A549 (cell line): ENCODE measurements at regions of chr3 and their contacts with region 1.

Region 1: GRCh38 chr3:132399054-132399929 is 18.0 kb upstream of the DNAJC13 start:
- DNase-seq: peak; percentile 34 to 37
- ATAC-seq: peak; percentile 50 to 69; a peak in 4 of 6 replicates
- H3K4me3 ChIP-seq: no peak overlapping the region
- H3K27ac ChIP-seq: no peak overlapping the region
- H3K4me1 ChIP-seq: no peaks in the 10 kb centered on the region
- CTCF ChIP-seq: peak; percentile 73
- EP300 ChIP-seq: no peak
- POLR2A ChIP-seq: no peak
- RAD21 ChIP-seq: peak; percentile 77 to 82

Region 2: DNA sequence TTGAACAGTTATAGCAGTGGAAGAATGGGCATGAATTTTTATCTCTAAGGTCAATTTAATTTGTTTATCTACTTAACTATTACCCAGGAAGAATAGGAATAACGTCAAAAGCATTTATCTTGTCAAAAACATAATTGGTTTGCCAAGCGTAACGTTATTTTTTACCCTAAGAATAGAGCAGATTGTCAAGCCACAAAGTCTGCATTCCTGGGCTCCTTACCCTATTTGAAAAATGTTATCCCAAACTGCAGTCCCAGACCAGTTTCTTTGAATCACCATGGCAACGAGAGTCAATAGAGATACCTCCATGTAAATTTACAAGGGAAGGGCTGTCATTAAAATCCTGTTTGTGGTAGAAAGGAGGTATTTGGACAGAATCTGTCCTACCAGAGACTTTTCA is 425.6 kb before region 1 on chr3:
- CTCF ChIA-PET with region 1: no interaction called
- POLR2A ChIA-PET with region 1: no interaction called
- DNase-seq: no peak
- ATAC-seq: no peak
- H3K4me3 ChIP-seq: no peak overlapping the region
- H3K27ac ChIP-seq: no peak overlapping the region
- H3K4me1 ChIP-seq: no peaks in the 10 kb centered on the region
- CTCF ChIP-seq: no peak
- EP300 ChIP-seq: no peak
- POLR2A ChIP-seq: no peak
- RAD21 ChIP-seq: no peak

Region 3: GRCh38 chr3:132253262-132253878 is 145.9 kb before region 1 on chr3:
- CTCF ChIA-PET with region 1: interaction called, 22 read pairs
- POLR2A ChIA-PET with region 1: no interaction called
- DNase-seq: peak; percentile 23 to 70
- ATAC-seq: peak; percentile 55 to 77; a peak in 3 of 6 replicates
- H3K4me3 ChIP-seq: no peak overlapping the region
- H3K27ac ChIP-seq: no peak overlapping the region
- H3K4me1 ChIP-seq: peaks cover 22% of the 10 kb centered on the region
- CTCF ChIP-seq: peak; percentile 71
- EP300 ChIP-seq: no peak
- POLR2A ChIP-seq: no peak
- RAD21 ChIP-seq: peak; percentile 69 to 72

Region 4: DNA sequence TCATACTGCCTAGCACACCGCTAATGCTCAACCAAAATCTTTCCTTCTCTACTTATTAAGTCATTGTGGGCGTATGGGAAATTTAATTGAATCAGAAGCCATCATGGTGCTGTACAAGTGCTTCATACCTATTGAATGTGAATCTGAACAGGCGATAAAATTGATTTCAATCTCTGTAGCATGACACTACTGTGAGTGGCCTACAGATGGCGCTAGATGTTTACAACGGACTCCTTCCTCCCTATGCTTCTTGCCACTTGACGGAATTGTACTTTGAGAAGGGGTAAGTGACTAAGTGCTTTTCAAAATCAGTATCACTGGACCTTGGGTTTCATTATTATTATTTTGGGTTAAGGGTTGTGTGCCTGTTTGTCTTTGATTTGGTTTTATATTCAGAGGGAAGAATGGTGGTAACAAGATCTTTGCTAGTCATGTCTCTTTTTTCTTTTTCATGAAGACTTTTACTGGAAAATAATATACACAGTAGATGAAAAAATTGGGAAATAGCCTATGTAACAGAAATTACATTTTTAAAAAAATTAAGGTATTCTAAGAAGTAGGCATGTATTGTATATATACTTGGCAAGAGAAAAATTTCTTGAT is 46.6 kb before region 1 on chr3:
- CTCF ChIA-PET with region 1: interaction called, 118 read pairs
- POLR2A ChIA-PET with region 1: no interaction called
- DNase-seq: peak; percentile 38 to 61
- ATAC-seq: peak; percentile 43 to 82; a peak in 3 of 6 replicates
- H3K4me3 ChIP-seq: no peak overlapping the region
- H3K27ac ChIP-seq: no peak overlapping the region
- H3K4me1 ChIP-seq: no peaks in the 10 kb centered on the region
- CTCF ChIP-seq: peak; percentile 73
- EP300 ChIP-seq: no peak
- POLR2A ChIP-seq: no peak
- RAD21 ChIP-seq: peak; percentile 70 to 74

Region 5: GRCh38 chr3:132368962-132369361 is 30.3 kb before region 1 on chr3:
- CTCF ChIA-PET with region 1: interaction called, 10 read pairs
- POLR2A ChIA-PET with region 1: no interaction called
- DNase-seq: no peak
- ATAC-seq: no peak; a peak in 1 of 6 replicates
- H3K4me3 ChIP-seq: no peak overlapping the region
- H3K27ac ChIP-seq: no peak overlapping the region
- H3K4me1 ChIP-seq: no peaks in the 10 kb centered on the region
- CTCF ChIP-seq: no peak
- EP300 ChIP-seq: no peak
- POLR2A ChIP-seq: no peak
- RAD21 ChIP-seq: no peak

Region 6: GRCh38 chr3:132422531-132422930 is 23.2 kb after region 1 on chr3:
- CTCF ChIA-PET with region 1: interaction called, 10 read pairs
- POLR2A ChIA-PET with region 1: interaction called, 3 read pairs
- DNase-seq: no peak
- ATAC-seq: no peak
- H3K4me3 ChIP-seq: no peak overlapping the region
- H3K27ac ChIP-seq: no peak overlapping the region
- H3K4me1 ChIP-seq: peaks cover 35% of the 10 kb centered on the region
- CTCF ChIP-seq: no peak
- EP300 ChIP-seq: no peak
- POLR2A ChIP-seq: no peak
- RAD21 ChIP-seq: no peak